ENCODE measurements at regions of chr13 and their contacts with region 1.

Region 1: DNA sequence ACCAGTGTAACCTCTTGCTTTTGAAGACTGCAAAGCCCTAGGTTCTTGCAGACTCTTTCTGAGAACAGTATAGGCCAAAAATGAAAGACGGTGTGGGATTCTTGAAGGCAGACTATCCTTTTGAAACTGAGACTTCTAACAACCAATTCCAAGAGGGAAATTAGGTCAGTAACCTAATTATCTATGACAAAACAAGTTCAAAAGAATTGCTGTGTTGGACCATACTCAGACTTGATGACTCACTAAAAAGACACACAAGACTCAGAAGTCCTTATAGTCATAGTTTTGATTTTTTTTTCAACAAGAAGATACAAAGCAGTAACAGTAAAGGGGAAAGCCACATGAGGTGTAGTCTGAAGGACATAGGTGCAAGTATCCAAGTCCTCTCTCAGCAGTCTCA is 624.0 kb upstream of the GPC6 start:
- DNase-seq: no peak

Region 2: DNA sequence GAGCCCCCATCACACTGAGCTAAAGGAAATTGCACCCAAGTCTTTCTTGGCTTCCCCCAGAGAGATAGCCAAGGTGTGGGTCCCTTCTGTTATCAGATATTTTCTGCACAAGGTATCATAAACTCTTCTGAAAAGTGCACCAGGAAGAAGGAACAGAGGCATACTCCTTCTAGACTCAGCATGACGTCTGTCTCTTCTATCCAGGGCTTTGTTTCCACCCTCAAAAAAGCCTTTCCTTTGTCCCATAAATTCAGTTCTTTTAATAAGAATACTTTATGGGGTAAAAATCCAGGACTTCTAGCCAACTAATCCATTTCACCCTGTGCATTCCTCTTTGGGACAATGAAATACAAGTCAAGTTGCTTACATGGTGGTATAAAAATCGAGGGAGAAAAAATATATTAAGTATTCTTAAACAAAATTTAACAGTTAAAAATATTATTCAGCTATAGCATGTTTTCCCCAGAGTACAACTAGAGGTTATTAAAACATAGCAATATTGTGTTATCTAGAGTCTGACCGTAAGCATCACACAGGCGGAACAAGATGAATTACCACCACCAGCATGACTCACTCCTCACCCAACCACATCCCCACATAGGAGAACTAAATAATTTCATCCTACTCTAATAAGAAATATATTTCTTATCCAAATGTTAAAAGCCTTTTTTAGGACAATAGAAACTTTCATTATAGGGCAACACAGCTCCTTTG is 544.2 kb after region 1 on chr13:
- intact Hi-C with region 1: loop called in 1 of 2 experiments (anchors 5 kb)
- DNase-seq: no peak